ENCODE measurements at regions of chr11 and their contacts with region 1.

Region 1: GRCh38 chr11:124586238-124586860 is 16.6 kb downstream of the OR8A1 start:
- DNase-seq: peak; percentile 57
- ATAC-seq: no peak
- H3K4me3 Mint-ChIP-seq: no peak overlapping the region
- H3K27ac Mint-ChIP-seq: no peak overlapping the region
- H3K4me1 Mint-ChIP-seq: no peaks in the 10 kb centered on the region
- H3K27me3 Mint-ChIP-seq: peaks cover 19% of the 10 kb centered on the region

Region 2: DNA sequence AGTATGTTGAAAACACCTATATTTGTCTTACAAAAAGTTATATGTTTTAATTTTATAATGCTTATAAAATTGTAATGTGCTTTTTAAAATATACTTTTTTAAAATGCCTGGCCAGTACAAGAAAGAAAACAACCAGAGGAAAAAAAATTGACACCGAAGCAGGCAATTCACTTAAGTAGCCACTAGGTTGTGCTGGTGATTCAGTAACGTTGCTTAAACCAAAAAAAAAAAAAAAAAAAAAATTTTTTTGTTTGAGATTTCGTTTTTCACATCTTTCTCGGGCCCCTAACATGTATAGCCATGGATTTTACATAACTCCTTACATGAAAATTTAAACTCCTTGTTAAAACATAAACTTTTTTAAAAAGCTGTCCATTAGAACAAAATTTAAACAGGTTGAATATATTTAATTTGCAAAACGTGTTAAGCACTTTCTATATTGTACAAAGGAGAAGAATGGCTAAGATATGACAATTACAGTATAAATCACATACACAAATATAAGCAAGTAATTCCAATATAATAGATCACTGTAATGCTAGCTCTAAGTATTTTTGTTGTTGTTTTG is 170.9 kb before region 1 on chr11:
- CTCF ChIA-PET with region 1: interaction called, 25 read pairs
- POLR2A ChIA-PET with region 1: no interaction called
- DNase-seq: no peak
- ATAC-seq: no peak
- H3K4me3 Mint-ChIP-seq: no peak overlapping the region
- H3K27ac Mint-ChIP-seq: no peak overlapping the region
- H3K4me1 Mint-ChIP-seq: no peaks in the 10 kb centered on the region
- H3K27me3 Mint-ChIP-seq: peaks cover 9% of the 10 kb centered on the region

Measured in activated CD8-positive, alpha-beta T cell treated with anti-CD3 and anti-CD28 coated beads, Interleukin-2, amount 10 ng/mL, durations not matched to agents 7 days and 5 days (primary cell).